Dorsolateral prefrontal cortex (tissue), 120 donors: ENCODE measurements at regions of chr1 and their contacts with region 1.

Region 1: DNA sequence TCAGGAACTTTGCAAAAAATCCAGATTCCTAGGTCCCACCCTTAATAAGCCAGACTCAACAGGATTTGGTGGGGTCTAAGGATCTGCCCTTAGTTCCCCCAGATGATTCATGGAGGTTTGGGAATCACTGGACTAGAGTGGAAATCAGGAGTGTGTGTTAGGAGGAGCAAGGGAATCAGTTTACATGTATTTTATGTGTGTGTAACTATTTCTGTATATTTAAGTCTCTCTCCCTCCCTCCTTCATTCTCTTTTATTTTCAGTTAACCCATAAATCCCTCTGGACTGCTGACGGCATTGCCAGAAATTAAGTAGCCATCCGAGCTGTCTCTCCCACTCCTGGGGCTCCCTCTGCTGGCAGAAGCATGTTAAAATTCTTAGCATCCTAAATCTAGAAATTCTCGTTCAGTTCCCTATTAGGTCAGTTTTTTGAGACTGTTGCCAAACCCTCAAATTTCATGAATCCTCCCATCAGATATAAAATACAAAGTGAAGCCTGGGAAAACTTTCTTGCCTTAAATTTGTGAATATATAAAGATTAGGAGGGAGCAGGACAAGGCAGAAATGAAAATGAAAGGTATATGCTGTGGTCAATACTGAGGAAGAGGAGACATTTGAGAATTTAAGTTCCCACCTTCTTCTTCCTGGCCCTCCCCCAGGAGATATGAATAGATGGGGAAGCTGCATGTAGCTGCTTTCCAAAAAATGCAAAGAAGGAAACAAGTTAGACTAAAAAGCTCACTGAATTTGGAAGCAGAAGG is 11.7 kb upstream of the HSD11B1 start:
- DNase-seq: peak; percentile 40 to 75 (median 68)
- H3K4me3 ChIP-seq: peak overlapping the region in 5 of 59 donors; percentile 7 to 35 (median 29)
- H3K27ac ChIP-seq: peak overlapping the region in 3 of 59 donors; percentile 4 to 22 (median 9)
- H3K27me3 ChIP-seq: no peaks in the 10 kb centered on the region
- CTCF ChIP-seq: peak; percentile 75 to 98 (median 89)

Region 2: GRCh38 chr1:209576798-209577197 is 116.1 kb before region 1 on chr1:
- intact Hi-C with region 1: loop called (anchors 2 to 5 kb)
- DNase-seq: peak; percentile 68 to 88 (median 82)
- H3K4me3 ChIP-seq: no peak overlapping the region
- H3K27ac ChIP-seq: peak overlapping the region in 1 of 59 donors; percentile 3
- H3K27me3 ChIP-seq: peaks cover 0 to 21% (median 0%) of the 10 kb centered on the region in 45 donors
- CTCF ChIP-seq: peak; percentile 73 to 99 (median 93)

Region 3: DNA sequence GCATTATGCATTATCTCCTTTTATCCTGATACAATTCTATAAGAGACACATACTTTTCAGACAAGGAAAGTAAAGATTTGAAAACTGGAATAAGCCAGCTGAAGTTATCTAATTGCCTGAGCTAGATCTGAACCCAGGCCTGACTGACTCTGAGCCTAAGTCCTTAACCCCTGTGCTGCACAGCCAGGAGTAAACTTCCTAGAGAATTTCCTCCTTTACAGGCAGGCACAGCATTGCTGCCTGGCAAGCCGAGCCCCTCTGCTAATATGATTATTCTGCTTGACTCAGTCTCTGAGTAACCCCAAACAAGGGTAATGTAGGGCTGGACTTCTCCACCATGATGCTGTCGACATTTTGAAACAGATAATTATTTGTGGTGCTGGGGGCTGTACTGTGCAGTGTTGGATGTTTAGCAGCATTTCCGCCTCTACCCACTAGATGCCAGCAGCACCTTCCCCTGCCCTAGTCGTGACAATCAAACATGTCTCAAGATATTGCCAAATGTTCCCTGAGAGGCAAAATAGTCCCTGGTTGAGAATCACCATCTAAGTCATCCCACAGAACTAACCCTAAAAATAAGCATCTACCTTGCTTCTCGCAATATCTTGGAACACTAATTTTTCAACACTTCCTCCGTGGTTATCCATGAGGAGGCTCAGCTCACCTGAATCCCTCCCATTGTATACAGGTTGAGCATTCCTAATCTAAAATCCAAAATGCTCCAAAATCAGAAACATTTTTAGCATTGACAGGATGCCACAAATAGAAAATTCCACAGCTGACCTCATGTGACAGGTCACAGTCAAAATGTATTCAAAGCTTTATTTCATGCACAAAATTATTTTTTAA is 90.9 kb before region 1 on chr1:
- intact Hi-C with region 1: loop called in 1 of 2 experiments (anchors 1 kb)
- DNase-seq: peak in 6 of 10 donors; percentile 33 to 68 (median 58)
- H3K4me3 ChIP-seq: no peak overlapping the region
- H3K27ac ChIP-seq: peak overlapping the region in 14 of 59 donors; percentile 4 to 67 (median 36)
- H3K27me3 ChIP-seq: peaks cover 0 to 4% (median 0%) of the 10 kb centered on the region in 45 donors
- CTCF ChIP-seq: peak; percentile 45 to 88 (median 74)

Region 4: DNA sequence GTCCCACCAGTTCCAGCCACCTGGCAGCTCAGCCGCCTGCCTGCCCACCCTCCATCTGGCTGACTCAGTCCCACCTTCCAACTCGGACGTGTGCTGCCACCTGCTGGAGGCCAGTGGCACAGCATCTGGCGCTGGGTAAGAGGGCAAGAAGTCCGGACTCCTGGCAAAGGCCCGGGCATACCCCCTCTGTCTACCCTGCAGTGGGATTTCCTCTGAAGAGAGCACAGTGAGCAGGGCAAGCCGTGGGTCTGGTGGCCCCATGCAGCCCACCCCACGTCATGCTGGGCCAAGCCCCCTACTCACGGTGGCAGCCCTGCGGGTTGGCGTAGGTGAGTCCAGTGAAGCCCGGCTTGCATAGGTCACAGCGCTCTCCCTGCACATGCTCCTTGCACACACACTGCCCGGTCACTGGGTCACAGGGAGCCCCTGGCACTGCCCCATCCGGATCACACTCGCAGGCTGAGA is 65.2 kb before region 1 on chr1:
- intact Hi-C with region 1: loop called in 1 of 2 experiments (anchors 5 kb)
- DNase-seq: peak; percentile 72 to 91 (median 84)
- H3K4me3 ChIP-seq: peak overlapping the region in 15 of 59 donors; percentile 3 to 45 (median 26)
- H3K27ac ChIP-seq: peak overlapping the region in 21 of 59 donors; percentile 2 to 70 (median 44)
- H3K27me3 ChIP-seq: no peaks in the 10 kb centered on the region
- CTCF ChIP-seq: peak; percentile 89 to 100 (median 99)

Region 5: GRCh38 chr1:209635850-209636249 is 57.1 kb before region 1 on chr1:
- intact Hi-C with region 1: loop called in 1 of 2 experiments (anchors 5 kb)
- DNase-seq: no peak
- H3K4me3 ChIP-seq: no peak overlapping the region
- H3K27ac ChIP-seq: no peak overlapping the region
- H3K27me3 ChIP-seq: no peaks in the 10 kb centered on the region
- CTCF ChIP-seq: no peak

Region 6: GRCh38 chr1:209643285-209644020 is 49.5 kb before region 1 on chr1:
- intact Hi-C with region 1: loop called (anchors 2 to 5 kb)
- DNase-seq: peak; percentile 22 to 87 (median 77)
- H3K4me3 ChIP-seq: no peak overlapping the region
- H3K27ac ChIP-seq: peak overlapping the region; percentile 33 to 96 (median 88)
- H3K27me3 ChIP-seq: no peaks in the 10 kb centered on the region
- CTCF ChIP-seq: peak in 39 of 56 donors; percentile 5 to 63 (median 31)